ENCODE measurements at regions of chr3 and their contacts with region 1.

Region 1: GRCh38 chr3:171187706-171188290 is 161.3 kb upstream of the SLC2A2 start:
- DNase-seq: peak; percentile 25 to 37 (median 31)
- H3K4me3 ChIP-seq: no peak overlapping the region
- H3K4me3 Mint-ChIP-seq: no peak overlapping the region
- H3K27ac ChIP-seq: no peak overlapping the region
- H3K27ac Mint-ChIP-seq: no peak overlapping the region
- H3K4me1 ChIP-seq: peaks cover 21% of the 10 kb centered on the region
- H3K4me1 Mint-ChIP-seq: peaks cover 28 to 34% (median 31%) of the 10 kb centered on the region in 4 donors
- H3K27me3 ChIP-seq: no peaks in the 10 kb centered on the region
- H3K27me3 Mint-ChIP-seq: no peaks in the 10 kb centered on the region

Region 2: DNA sequence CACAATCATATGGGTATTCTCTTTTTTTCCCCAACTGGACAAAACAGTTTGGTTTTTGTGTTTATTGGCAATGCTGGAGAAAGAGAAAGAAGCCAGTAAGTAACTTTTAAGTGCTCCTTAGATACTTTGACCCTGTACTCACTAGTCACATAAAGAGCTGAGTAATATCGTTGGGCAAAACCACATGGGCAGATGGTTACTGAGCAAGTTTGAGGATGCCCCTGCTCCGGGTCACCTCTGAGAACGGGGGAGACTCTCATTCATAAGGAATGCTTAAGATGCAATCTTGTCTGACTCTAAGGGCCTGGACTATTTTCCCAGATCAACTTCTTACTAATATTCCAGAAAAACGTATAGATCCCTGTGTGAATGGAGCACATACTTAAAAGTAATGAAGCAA is 54.9 kb before region 1 on chr3:
- CTCF ChIA-PET with region 1: no interaction called
- POLR2A ChIA-PET with region 1: no interaction called
- intact Hi-C with region 1: no loop called
- DNase-seq: peak in 1 of 5 donors; percentile 27
- H3K4me3 ChIP-seq: no peak overlapping the region
- H3K4me3 Mint-ChIP-seq: no peak overlapping the region
- H3K27ac ChIP-seq: no peak overlapping the region
- H3K27ac Mint-ChIP-seq: peak overlapping the region in 1 of 7 donors; percentile 3
- H3K4me1 ChIP-seq: no peaks in the 10 kb centered on the region
- H3K4me1 Mint-ChIP-seq: peaks cover 0 to 14% (median 7%) of the 10 kb centered on the region in 4 donors
- H3K27me3 ChIP-seq: no peaks in the 10 kb centered on the region
- H3K27me3 Mint-ChIP-seq: no peaks in the 10 kb centered on the region

Region 3: GRCh38 chr3:171328419-171329082 is 140.8 kb after region 1 on chr3:
- CTCF ChIA-PET with region 1: interaction called, 10 read pairs
- POLR2A ChIA-PET with region 1: interaction called, 3 read pairs
- intact Hi-C with region 1: loop called (anchors 1 kb)
- DNase-seq: peak; percentile 52 to 68 (median 63)
- H3K4me3 ChIP-seq: no peak overlapping the region
- H3K4me3 Mint-ChIP-seq: peak overlapping the region in 7 of 8 donors; percentile 1 to 74 (median 60)
- H3K27ac ChIP-seq: no peak overlapping the region
- H3K27ac Mint-ChIP-seq: peak overlapping the region in 5 of 7 donors; percentile 51 to 84 (median 72)
- H3K4me1 ChIP-seq: peaks cover 40% of the 10 kb centered on the region
- H3K4me1 Mint-ChIP-seq: peaks cover 35 to 76% (median 60%) of the 10 kb centered on the region in 4 donors
- H3K27me3 ChIP-seq: no peaks in the 10 kb centered on the region
- H3K27me3 Mint-ChIP-seq: no peaks in the 10 kb centered on the region

Measured in CD4-positive, alpha-beta memory T cell (primary cell).